ENCODE measurements at regions of chr12 and their contacts with region 1.

Region 1: GRCh38 chr12:58540480-58541299 is 379.6 kb downstream of the LRIG3 start:
- DNase-seq: peak; percentile 78
- H3K4me3 Mint-ChIP-seq: no peak overlapping the region
- H3K27ac Mint-ChIP-seq: no peak overlapping the region
- H3K4me1 Mint-ChIP-seq: peaks cover 20% of the 10 kb centered on the region
- H3K27me3 Mint-ChIP-seq: no peaks in the 10 kb centered on the region
- CTCF ChIP-seq: peak; percentile 91

Region 2: GRCh38 chr12:57983146-57983857 is 557.4 kb before region 1 on chr12:
- CTCF ChIA-PET with region 1: interaction called, 5 read pairs
- POLR2A ChIA-PET with region 1: no interaction called
- intact Hi-C with region 1: loop called (anchors 1 kb)
- DNase-seq: peak; percentile 65
- H3K4me3 Mint-ChIP-seq: no peak overlapping the region
- H3K27ac Mint-ChIP-seq: no peak overlapping the region
- H3K4me1 Mint-ChIP-seq: peaks cover 6% of the 10 kb centered on the region
- H3K27me3 Mint-ChIP-seq: no peaks in the 10 kb centered on the region
- CTCF ChIP-seq: peak; percentile 72

Region 3: DNA sequence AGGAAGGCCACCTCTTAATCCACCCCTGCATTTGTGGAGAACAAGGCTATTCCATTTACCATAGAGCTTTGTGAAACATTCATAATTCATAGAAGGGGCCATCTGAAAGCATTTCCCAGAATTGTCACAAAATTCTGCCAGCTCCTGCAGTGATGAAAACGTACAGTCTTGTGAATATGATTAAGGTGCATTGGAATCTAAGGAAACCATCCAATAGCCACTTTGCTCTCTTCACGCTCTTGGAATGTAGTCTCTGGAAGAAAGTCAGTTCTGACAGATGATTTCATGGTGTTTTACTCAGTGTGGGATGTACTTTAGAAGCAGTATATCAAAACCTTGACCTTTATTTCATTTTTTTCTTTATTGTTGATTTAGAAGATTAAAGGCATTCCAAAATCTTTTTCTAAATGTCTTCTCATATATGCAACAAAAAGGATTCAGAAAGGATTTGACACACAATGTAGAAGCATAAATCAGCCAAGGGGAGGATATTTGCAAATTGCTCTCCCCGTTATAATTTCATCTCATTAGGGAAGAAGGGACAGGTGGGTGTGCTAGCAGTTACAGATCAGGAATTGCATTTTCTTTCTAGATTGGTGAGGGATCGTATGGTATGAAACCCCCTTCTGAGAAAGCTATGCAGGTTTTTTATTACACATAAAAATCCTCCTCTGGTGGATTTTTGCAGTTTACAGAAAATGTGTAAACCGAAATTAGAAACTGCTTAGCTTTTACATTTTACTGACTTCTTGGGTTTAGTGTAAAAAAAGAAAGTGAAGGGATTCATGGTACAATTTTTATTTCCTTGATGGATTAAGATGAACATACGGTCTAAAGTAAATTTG is 10.6 kb before region 1 on chr12:
- CTCF ChIA-PET with region 1: interaction called, 15 read pairs
- POLR2A ChIA-PET with region 1: interaction called, 3 read pairs
- intact Hi-C with region 1: no loop called
- DNase-seq: peak; percentile 68
- H3K4me3 Mint-ChIP-seq: peak overlapping the region; percentile 29
- H3K27ac Mint-ChIP-seq: peak overlapping the region; percentile 60
- H3K4me1 Mint-ChIP-seq: peaks cover 35% of the 10 kb centered on the region
- H3K27me3 Mint-ChIP-seq: no peaks in the 10 kb centered on the region
- CTCF ChIP-seq: no peak

Region 4: DNA sequence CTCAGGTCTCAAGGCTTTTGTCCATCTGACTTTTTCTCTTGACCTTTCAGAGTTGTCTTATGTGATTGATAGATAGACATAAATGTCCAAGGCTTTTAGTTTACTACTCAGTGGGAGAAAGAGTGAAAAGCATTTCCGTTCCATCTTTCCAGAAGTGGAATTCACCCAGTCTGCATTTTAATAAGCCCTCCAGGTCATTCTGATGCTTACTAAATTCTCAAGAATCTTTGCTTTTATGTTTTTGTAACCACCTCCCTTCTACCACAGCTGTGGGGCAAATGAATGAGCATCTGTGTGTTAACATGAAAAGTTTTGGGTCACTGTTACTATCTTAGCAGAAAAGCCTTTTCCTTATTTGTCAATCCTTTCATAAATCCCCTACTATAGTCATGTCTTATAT is 128.2 kb after region 1 on chr12:
- CTCF ChIA-PET with region 1: no interaction called
- POLR2A ChIA-PET with region 1: no interaction called
- intact Hi-C with region 1: no loop called
- DNase-seq: no peak
- H3K4me3 Mint-ChIP-seq: no peak overlapping the region
- H3K27ac Mint-ChIP-seq: no peak overlapping the region
- H3K4me1 Mint-ChIP-seq: no peaks in the 10 kb centered on the region
- H3K27me3 Mint-ChIP-seq: no peaks in the 10 kb centered on the region
- CTCF ChIP-seq: no peak

Region 5: DNA sequence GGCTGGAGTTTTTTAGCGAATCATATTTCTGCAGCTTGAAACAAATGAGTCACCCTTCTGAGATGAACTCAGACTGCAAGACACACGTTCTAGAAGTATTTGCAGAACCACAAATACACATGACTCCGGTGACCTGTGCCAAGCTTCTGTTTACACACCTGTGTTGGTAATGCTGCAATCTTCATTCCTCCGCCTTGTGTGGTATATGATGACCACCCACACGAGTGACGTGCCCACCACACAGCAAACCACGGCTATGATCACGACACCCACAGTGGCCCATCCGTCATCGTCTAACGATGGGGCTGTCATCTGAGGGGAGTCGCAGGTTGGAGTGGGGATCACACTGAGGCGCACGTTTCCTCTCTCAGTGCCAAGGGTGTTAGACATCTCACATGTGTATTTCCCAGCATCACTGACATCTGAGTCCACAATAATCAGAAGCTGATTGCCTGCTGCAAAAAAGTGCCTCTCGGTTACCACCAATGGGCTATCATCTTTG is 336.6 kb after region 1 on chr12:
- CTCF ChIA-PET with region 1: interaction called, 10 read pairs
- POLR2A ChIA-PET with region 1: interaction called, 5 read pairs
- intact Hi-C with region 1: loop called (anchors 5 kb)
- DNase-seq: peak; percentile 94
- H3K4me3 Mint-ChIP-seq: no peak overlapping the region
- H3K27ac Mint-ChIP-seq: peak overlapping the region; percentile 51
- H3K4me1 Mint-ChIP-seq: peaks cover 17% of the 10 kb centered on the region
- H3K27me3 Mint-ChIP-seq: no peaks in the 10 kb centered on the region
- CTCF ChIP-seq: no peak

Region 6: GRCh38 chr12:58907391-58907790 is 366.7 kb after region 1 on chr12:
- CTCF ChIA-PET with region 1: interaction called, 11 read pairs
- POLR2A ChIA-PET with region 1: interaction called, 3 read pairs
- intact Hi-C with region 1: no loop called
- DNase-seq: no peak
- H3K4me3 Mint-ChIP-seq: no peak overlapping the region
- H3K27ac Mint-ChIP-seq: peak overlapping the region; percentile 99
- H3K4me1 Mint-ChIP-seq: peaks cover 39% of the 10 kb centered on the region
- H3K27me3 Mint-ChIP-seq: no peaks in the 10 kb centered on the region
- CTCF ChIP-seq: no peak

Region 7: DNA sequence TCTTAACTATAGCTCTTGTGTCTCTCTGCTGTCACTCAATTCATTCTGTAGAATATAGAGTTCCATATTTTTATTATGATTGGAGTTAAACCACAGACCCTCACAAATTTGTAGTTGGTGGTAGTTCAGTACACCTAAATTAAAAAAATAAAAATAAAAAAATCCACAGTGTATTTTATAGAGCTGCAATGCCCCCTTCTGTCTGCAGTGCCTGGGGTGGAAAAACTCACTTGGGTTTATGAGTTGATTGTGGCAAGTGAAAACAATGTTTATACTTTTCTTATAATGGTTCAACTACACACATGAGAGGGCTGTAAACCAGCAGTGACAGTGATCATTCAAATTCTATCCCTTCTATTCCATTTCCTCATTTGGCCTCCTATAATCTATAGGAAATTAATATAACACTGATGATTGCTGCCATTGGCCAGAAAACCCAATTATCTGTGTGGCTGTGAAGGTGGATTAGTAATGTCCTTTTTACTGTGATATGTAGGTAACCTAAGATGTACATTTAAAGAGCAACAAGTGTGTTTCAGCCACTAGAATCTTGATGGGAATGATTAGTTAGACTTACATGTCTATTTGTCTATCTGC is 546.5 kb after region 1 on chr12:
- CTCF ChIA-PET with region 1: interaction called, 57 read pairs
- POLR2A ChIA-PET with region 1: interaction called, 8 read pairs
- intact Hi-C with region 1: loop called (anchors 1 kb)
- DNase-seq: peak; percentile 37
- H3K4me3 Mint-ChIP-seq: no peak overlapping the region
- H3K27ac Mint-ChIP-seq: no peak overlapping the region
- H3K4me1 Mint-ChIP-seq: peaks cover 33% of the 10 kb centered on the region
- H3K27me3 Mint-ChIP-seq: no peaks in the 10 kb centered on the region
- CTCF ChIP-seq: peak; percentile 79

Region 8: GRCh38 chr12:59149997-59150642 is 609.4 kb after region 1 on chr12:
- CTCF ChIA-PET with region 1: interaction called, 73 read pairs
- POLR2A ChIA-PET with region 1: interaction called, 3 read pairs
- intact Hi-C with region 1: loop called (anchors 1 kb)
- DNase-seq: peak; percentile 84
- H3K4me3 Mint-ChIP-seq: no peak overlapping the region
- H3K27ac Mint-ChIP-seq: no peak overlapping the region
- H3K4me1 Mint-ChIP-seq: peaks cover 11% of the 10 kb centered on the region
- H3K27me3 Mint-ChIP-seq: no peaks in the 10 kb centered on the region
- CTCF ChIP-seq: peak; percentile 91

Region 9: GRCh38 chr12:59230334-59230733 is 689.6 kb after region 1 on chr12:
- CTCF ChIA-PET with region 1: no interaction called
- POLR2A ChIA-PET with region 1: no interaction called
- intact Hi-C with region 1: no loop called
- DNase-seq: no peak
- H3K4me3 Mint-ChIP-seq: no peak overlapping the region
- H3K27ac Mint-ChIP-seq: no peak overlapping the region
- H3K4me1 Mint-ChIP-seq: no peaks in the 10 kb centered on the region
- H3K27me3 Mint-ChIP-seq: no peaks in the 10 kb centered on the region
- CTCF ChIP-seq: no peak

Measured in MCF 10A (cell line).